ENCODE measurements at regions of chr6 and their contacts with region 1.

Region 1: GRCh38 chr6:136822376-136823127 is at the start of gene PEX7:
- DNase-seq: peak; percentile 92
- H3K4me3 ChIP-seq: peak within 1 kb of the TSS; percentile 74 to 88
- H3K27ac ChIP-seq: peak within 1 kb of the TSS; percentile 88 to 91
- H3K4me1 ChIP-seq: no peaks in the 10 kb centered on the region
- H3K27me3 ChIP-seq: no peaks in the 10 kb centered on the region
- CTCF ChIP-seq: peak in 3 of 4 experiments; percentile 24 to 70 (median 68)
- POLR2A ChIP-seq: peak; percentile 43
- total RNA-seq, gene PEX7: 15.4 to 27.6 TPM

Region 2: DNA sequence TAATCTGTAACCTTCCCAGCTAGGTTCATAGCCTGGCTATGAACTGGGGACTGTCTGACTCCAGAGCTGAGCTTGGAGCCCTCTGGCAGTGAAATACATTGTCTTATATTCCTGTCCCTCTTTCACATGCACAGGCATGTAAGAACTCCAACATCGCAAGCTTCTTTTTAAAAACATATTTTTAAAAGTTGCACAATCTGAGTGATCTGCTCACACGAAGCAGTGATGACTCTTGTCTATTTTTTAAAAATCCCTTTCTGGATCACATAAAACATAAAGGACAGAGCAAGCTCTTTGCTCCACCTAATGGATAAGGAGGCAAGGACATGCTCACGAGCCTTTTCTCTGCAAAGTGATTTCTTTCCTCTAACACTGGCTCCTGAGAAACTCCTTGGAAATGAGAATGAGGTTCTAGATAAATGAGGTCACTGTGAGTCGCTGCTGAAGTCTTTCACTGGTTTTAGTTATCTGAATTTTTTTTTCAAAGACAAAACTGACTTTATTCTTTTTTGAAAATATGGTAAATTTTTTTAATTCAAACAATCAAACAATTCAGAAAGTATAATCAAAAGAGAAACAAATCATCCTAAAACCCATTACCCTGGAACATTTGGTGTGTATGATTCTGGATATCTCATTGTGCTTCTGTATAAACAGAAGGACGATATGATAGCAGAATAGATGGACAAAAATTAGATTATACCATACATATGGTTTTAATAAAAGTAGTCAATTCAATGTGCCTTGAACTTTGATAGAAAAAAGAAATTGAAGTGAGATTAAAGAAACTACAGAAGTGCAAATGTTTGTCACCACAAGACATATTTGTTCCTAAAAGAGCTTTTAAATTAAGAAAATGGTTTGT is 191.4 kb after region 1 on chr6:
- intact Hi-C with region 1: loop called (anchors 10 kb)
- DNase-seq: no peak
- H3K4me3 ChIP-seq: no peak overlapping the region
- H3K27ac ChIP-seq: no peak overlapping the region
- H3K4me1 ChIP-seq: no peaks in the 10 kb centered on the region
- H3K27me3 ChIP-seq: no peaks in the 10 kb centered on the region
- CTCF ChIP-seq: peak in 3 of 4 experiments; percentile 17 to 58 (median 55)
- POLR2A ChIP-seq: no peak

Region 3: DNA sequence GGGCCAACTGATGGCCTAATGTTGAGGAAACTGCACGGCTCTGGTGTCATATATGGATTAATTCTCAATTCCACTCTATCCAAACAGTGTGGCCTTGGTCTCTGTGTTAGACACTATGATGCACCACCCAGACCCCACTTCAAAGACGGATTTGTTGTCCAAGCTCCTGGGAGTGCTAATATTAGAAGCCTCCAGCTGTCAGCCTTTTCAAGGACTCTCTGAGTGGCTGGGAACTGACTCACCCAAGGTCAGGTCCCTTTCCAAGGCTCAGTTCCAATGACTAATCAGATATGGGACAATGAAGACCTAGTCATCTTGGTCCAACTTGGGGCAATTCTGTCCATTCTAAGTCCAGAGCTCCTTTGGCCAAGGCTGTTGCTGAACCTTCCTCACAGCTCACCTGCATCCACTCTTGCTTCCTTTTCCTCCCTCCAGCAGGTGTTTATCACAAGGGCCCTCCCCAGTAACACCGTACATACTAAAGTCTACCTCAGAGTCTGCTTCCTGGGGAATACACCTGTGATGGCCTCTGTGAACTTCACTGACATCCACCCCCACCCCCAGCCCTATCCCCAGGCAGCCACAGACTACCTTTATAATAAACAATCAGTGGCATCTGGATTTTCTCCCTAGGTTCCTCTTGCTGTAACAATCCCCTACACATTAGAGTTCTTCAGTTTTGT is 229.4 kb after region 1 on chr6:
- intact Hi-C with region 1: no loop called
- DNase-seq: no peak
- H3K4me3 ChIP-seq: no peak overlapping the region
- H3K27ac ChIP-seq: no peak overlapping the region
- H3K4me1 ChIP-seq: peaks cover 3% of the 10 kb centered on the region
- H3K27me3 ChIP-seq: no peaks in the 10 kb centered on the region
- CTCF ChIP-seq: no peak
- POLR2A ChIP-seq: no peak

Measured in prostate gland (tissue), 2 donors.